Activated CD8-positive, alpha-beta T cell treated with anti-CD3 and anti-CD28 coated beads for 36 hours (primary cell): ENCODE measurements at regions of chr10 and their contacts with region 1.

Region 1: DNA sequence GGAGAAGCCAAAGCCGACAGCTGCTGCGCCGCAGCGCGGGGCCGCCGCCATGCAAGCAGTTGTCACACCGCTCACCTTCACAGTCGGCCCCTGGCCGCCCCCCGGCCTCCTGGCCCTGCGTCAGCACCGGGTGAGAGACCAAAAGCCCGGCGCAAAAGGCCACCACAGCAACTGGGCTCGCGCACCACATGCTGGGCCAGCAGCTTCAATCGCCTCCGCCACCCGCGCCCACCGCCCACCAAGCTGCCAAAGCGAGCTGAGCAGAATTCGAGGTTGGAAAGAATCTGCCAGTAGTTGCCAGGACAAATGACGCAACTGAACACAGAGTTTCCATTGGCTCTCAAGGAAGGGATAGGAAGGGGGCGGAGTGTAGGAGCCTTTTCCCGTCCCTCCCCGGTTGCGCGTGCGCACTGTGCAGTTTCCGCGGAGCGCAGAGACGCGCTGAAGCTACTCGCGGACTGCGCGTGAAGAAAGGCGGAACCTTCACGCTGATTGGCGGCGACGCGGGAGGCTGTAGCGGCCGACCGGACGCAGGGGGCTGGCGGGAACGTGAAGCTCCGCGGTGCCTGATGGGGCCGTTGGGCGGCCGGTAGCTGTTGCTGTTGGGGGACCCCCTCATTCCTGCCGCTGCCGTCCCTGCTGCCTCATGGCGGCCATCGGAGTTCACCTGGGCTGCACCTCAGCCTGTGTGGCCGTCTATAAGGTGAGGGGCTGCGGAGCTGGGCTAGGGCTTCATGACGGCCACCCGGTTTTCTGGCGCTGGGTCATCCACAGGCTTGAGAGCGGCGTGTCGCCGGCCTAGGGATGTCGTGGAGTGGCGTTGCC is at the starts of genes CDNF, HSPA14 and MSANTD7:
- DNase-seq: peak; percentile 99
- ATAC-seq: peak; percentile 96
- H3K4me3 Mint-ChIP-seq: peak within 1 kb of the TSS; percentile 95
- H3K27ac Mint-ChIP-seq: peak within 1 kb of the TSS; percentile 98
- H3K4me1 Mint-ChIP-seq: peaks cover 24% of the 10 kb centered on the region
- H3K27me3 Mint-ChIP-seq: no peaks in the 10 kb centered on the region
- CTCF ChIP-seq: no peak
- total RNA-seq, gene CDNF: 1.5 to 1.8 TPM
- total RNA-seq, gene HSPA14: 36.1 to 36.7 TPM
- total RNA-seq, gene MSANTD7: 22.5 to 23.9 TPM

Region 2: GRCh38 chr10:14536241-14537213 is 301.4 kb before region 1 on chr10:
- CTCF ChIA-PET with region 1: interaction called, 17 read pairs
- POLR2A ChIA-PET with region 1: no interaction called
- intact Hi-C with region 1: no loop called
- DNase-seq: peak; percentile 67
- ATAC-seq: peak; percentile 44
- H3K4me3 Mint-ChIP-seq: no peak overlapping the region
- H3K27ac Mint-ChIP-seq: peak overlapping the region; percentile 39
- H3K4me1 Mint-ChIP-seq: peaks cover 78% of the 10 kb centered on the region
- H3K27me3 Mint-ChIP-seq: no peaks in the 10 kb centered on the region
- CTCF ChIP-seq: peak; percentile 65

Region 3: GRCh38 chr10:14812271-14812670 is 25.7 kb before region 1 on chr10:
- CTCF ChIA-PET with region 1: no interaction called
- POLR2A ChIA-PET with region 1: no interaction called
- intact Hi-C with region 1: no loop called
- DNase-seq: no peak
- ATAC-seq: peak; percentile 49
- H3K4me3 Mint-ChIP-seq: no peak overlapping the region
- H3K27ac Mint-ChIP-seq: no peak overlapping the region
- H3K4me1 Mint-ChIP-seq: peaks cover 20% of the 10 kb centered on the region
- H3K27me3 Mint-ChIP-seq: no peaks in the 10 kb centered on the region
- CTCF ChIP-seq: no peak

Region 4: DNA sequence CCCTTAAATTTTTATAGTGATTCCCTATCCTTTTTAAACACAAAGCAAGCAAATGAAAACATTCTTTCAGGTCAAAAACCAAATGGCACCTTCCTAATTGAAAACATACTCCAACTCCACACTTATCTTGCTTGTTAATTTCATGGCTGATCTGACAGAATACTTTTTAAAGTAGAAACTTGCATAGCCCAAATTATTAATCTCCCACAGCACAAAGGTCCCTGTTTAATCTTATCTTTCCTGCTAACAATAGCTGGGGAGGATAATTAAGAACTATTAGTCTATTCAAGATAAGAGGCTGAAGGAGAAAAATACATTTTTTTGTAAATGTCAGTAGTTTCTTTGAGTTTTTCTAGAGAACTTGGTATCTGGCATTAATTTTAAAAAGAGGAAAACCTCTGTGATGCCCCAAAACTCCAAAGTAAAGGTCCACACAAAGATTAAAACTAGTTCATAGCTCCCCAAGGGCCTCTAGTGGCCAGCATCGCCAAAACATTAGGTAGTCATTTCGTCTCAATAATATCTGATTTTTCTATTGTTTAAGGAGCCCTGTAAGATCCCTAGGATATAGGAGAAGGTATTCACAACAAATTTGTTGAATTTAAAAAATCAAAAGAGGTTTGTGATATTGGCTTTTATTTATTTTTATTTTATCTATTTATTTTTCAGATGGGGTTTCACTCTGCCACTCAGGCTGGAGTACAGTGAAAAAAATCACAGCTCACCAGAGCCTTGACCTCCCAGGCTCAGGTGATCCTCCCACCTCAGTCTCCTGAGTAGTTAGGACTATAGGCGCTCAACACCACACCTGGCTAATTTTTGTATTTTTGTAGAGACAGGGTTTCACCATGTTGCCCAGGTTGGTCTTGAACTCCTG is 14.9 kb before region 1 on chr10:
- CTCF ChIA-PET with region 1: interaction called, 35 read pairs
- POLR2A ChIA-PET with region 1: interaction called, 4 read pairs
- intact Hi-C with region 1: no loop called
- DNase-seq: peak; percentile 69
- ATAC-seq: peak; percentile 68
- H3K4me3 Mint-ChIP-seq: no peak overlapping the region
- H3K27ac Mint-ChIP-seq: no peak overlapping the region
- H3K4me1 Mint-ChIP-seq: peaks cover 3% of the 10 kb centered on the region
- H3K27me3 Mint-ChIP-seq: no peaks in the 10 kb centered on the region
- CTCF ChIP-seq: peak; percentile 83

Region 5: DNA sequence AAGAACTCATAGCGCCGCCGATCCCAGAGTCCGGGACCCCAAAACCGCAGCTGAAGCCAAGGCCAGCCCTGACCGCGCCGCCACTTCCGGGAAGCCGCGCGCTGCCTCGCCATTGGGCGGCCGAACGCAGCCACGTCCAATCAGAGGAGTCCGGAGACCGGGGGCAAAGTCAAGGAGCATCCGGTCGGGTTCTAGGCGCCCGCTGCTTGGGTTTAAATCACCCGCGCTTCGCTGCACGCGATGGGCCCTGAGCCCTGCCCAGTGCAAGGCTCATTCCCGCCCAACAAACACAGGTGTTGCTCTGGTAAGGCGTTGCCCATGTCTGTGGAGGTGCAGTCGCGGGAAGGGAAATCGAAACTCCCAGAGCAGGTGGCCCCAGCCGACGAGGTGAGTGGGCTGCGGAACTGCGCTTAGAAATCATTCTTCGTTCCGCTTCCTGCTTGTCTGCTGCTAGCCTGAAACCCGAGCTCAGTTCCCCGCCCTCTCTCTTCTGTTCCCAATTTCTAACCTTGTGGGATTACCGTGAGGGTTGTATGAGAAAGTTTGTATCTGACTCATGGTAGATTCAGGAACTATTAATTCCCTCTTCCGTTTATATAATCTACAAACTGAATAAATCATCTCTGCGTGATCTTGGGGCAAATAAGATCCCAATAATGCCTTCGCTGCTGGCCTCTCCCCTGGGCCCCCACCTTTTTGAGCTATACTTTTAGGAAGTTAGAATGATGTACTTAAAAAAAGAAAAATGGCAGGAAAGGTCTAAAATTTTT is 116.2 kb after region 1 on chr10 and contains the start of gene DCLRE1C:
- CTCF ChIA-PET with region 1: no interaction called
- POLR2A ChIA-PET with region 1: interaction called, 15 read pairs
- intact Hi-C with region 1: loop called (anchors 10 kb)
- DNase-seq: peak; percentile 93
- ATAC-seq: peak; percentile 94
- H3K4me3 Mint-ChIP-seq: peak within 1 kb of the TSS; percentile 94
- H3K27ac Mint-ChIP-seq: peak within 1 kb of the TSS; percentile 98
- H3K4me1 Mint-ChIP-seq: peaks cover 43% of the 10 kb centered on the region
- H3K27me3 Mint-ChIP-seq: no peaks in the 10 kb centered on the region
- CTCF ChIP-seq: no peak
- total RNA-seq, gene DCLRE1C: 15.0 to 17.5 TPM

Region 6: DNA sequence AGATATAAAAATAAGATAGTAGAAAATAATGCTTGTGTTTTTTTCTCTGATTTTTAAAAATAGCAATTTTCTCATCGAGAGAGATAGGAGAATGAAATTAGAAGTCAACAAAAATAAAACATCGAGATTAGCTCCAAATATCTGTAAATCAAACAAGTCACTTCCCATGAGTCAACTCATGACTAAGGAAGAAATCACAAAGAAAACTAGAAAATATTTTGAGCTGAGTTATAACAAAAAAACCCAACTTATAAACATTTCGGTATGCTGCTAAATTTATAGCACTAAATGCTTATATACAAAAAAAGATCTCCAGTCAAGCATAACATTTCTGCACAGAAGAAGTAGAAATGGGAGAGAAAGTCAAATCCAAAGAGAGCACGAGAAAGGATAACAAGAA is 741.6 kb after region 1 on chr10:
- CTCF ChIA-PET with region 1: no interaction called
- POLR2A ChIA-PET with region 1: no interaction called
- intact Hi-C with region 1: no loop called
- DNase-seq: no peak
- ATAC-seq: no peak
- H3K4me3 Mint-ChIP-seq: no peak overlapping the region
- H3K27ac Mint-ChIP-seq: no peak overlapping the region
- H3K4me1 Mint-ChIP-seq: no peaks in the 10 kb centered on the region
- H3K27me3 Mint-ChIP-seq: peaks cover 3% of the 10 kb centered on the region
- CTCF ChIP-seq: no peak